HEK293 (cell line): ENCODE measurements at regions of chr3 and their contacts with region 1.

Region 1: GRCh38 chr3:194404365-194405140 is 5.5 kb upstream of the GP5 start:
- H3K4me3 ChIP-seq: no peak overlapping the region
- H3K27ac ChIP-seq: no peak overlapping the region
- H3K4me1 ChIP-seq: no peaks in the 10 kb centered on the region
- CTCF ChIP-seq: no peak; the same call in 1 of the 2 replicates

Region 2: DNA sequence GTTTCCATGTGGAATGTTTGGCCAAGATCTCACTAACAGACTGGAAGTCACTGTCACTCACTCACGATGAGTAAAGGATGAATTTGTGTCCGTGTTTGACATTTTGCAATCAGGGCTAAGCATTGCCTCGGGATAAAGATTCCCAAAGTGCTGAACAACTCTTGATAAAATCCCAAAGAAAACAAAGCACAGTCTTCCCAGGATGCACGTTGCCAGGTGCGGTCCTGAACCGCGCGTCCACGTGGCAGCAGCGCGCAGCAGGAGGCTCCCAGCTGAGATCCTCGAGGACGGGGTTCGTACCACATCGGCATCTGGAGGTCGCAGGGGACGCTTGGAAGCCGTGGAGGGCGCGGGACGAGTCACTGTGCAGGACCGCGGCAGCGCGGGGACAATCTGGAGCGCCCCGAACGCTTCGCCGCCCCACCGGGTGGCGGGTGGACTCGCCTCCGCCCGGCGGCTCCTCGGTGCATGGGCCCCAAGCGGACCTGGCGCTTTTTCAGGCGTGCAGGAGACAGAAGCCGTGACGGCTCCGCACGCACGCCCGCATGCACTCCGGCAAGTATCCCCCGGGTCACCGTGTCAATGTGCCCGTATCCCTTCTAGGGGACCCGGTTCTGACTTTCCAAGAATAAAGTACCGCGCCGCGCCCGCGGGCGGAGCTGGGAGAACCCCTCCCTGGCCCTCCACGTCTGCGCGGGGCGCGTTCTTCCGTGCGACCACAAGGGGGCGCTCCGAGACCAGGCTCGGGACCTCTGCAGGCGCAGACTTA is 71.2 kb before region 1 on chr3:
- CTCF ChIA-PET with region 1: interaction called, 38 read pairs
- POLR2A ChIA-PET with region 1: no interaction called
- H3K4me3 ChIP-seq: peak overlapping the region; percentile 27
- H3K27ac ChIP-seq: no peak overlapping the region; the same call in 1 of the 2 replicates
- H3K4me1 ChIP-seq: no peaks in the 10 kb centered on the region
- CTCF ChIP-seq: peak; percentile 94

Region 3: DNA sequence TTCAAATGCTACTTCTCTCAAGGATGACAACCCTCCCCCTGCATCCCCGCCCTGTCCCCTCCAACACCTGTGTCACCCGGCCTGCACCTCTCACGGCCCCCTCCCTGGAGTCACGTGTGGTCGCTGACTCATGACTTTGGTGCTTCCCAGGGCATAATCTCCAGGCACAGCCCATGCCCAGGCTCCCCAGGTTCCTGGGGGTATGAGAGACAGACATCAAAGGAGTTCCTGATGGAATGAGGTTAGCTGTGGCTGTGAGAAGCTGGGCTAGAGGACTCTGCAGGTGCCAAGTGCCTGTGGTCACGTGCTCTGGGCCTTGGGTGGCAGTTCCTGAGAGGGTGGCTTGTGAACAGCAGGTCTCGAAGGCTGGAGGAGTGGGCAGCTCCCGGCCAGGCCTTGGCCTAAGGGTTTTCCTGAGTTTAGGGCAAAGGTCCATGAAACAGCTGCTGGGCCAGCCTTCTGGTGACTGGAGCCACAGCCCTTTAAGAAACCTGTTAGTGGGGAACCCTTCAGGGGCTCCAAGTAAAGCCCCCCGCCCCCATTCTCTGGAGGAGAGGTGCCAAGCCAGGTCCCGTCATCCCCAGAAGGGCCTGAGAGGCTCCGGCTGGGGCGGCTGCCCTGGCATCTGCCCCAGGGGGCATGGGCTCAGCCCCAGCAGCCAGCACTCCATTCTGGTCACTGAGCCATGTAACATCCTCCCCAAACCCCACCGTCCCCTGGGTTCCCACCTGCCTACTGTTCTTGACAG is 636.4 kb after region 1 on chr3:
- CTCF ChIA-PET with region 1: no interaction called
- POLR2A ChIA-PET with region 1: no interaction called
- H3K4me3 ChIP-seq: no peak overlapping the region
- H3K27ac ChIP-seq: no peak overlapping the region
- H3K4me1 ChIP-seq: no peaks in the 10 kb centered on the region
- CTCF ChIP-seq: no peak